ENCODE measurements at regions of chr15 and their contacts with region 1.

Region 1: GRCh38 chr15:30043211-30043655 is 39.5 kb upstream of the GOLGA8J start:
- DNase-seq: peak; percentile 29
- ATAC-seq: peak; percentile 83
- H3K4me3 ChIP-seq: no peak overlapping the region
- H3K27ac ChIP-seq: no peak overlapping the region
- H3K4me1 ChIP-seq: no peaks in the 10 kb centered on the region
- H3K27me3 ChIP-seq: peaks cover 7% of the 10 kb centered on the region
- CTCF ChIP-seq: peak; percentile 50
- POLR2A ChIP-seq: no peak
- RAD21 ChIP-seq: peak; percentile 44

Region 2: GRCh38 chr15:29821416-29822131 is 221.7 kb before region 1 on chr15:
- CTCF ChIA-PET with region 1: interaction called, 4 read pairs
- POLR2A ChIA-PET with region 1: no interaction called
- dilution Hi-C with region 1: no loop called
- in situ Hi-C with region 1: no loop called
- intact Hi-C with region 1: loop called (anchors 1 kb)
- DNase-seq: peak; percentile 85
- ATAC-seq: peak; percentile 47
- H3K4me3 ChIP-seq: peak overlapping the region; percentile 95
- H3K27ac ChIP-seq: peak overlapping the region; percentile 99
- H3K4me1 ChIP-seq: peaks cover 4% of the 10 kb centered on the region
- H3K27me3 ChIP-seq: no peaks in the 10 kb centered on the region
- CTCF ChIP-seq: peak; percentile 41
- POLR2A ChIP-seq: no peak; the same call in 1 of the 2 replicates
- RAD21 ChIP-seq: peak; percentile 50

Region 3: GRCh38 chr15:29967956-29968889 is 75.0 kb before region 1 on chr15:
- CTCF ChIA-PET with region 1: no interaction called
- POLR2A ChIA-PET with region 1: no interaction called
- dilution Hi-C with region 1: no loop called
- in situ Hi-C with region 1: no loop called
- intact Hi-C with region 1: no loop called
- DNase-seq: no peak
- ATAC-seq: peak; percentile 75
- H3K4me3 ChIP-seq: peak overlapping the region; percentile 21; the same call in 1 of the 2 replicates
- H3K27ac ChIP-seq: no peak overlapping the region
- H3K4me1 ChIP-seq: no peaks in the 10 kb centered on the region
- H3K27me3 ChIP-seq: peaks cover 58% of the 10 kb centered on the region
- CTCF ChIP-seq: no peak
- POLR2A ChIP-seq: no peak
- RAD21 ChIP-seq: no peak